WTC11 (cell line): ENCODE measurements at regions of chr19 and their contacts with region 1.

Region 1: DNA sequence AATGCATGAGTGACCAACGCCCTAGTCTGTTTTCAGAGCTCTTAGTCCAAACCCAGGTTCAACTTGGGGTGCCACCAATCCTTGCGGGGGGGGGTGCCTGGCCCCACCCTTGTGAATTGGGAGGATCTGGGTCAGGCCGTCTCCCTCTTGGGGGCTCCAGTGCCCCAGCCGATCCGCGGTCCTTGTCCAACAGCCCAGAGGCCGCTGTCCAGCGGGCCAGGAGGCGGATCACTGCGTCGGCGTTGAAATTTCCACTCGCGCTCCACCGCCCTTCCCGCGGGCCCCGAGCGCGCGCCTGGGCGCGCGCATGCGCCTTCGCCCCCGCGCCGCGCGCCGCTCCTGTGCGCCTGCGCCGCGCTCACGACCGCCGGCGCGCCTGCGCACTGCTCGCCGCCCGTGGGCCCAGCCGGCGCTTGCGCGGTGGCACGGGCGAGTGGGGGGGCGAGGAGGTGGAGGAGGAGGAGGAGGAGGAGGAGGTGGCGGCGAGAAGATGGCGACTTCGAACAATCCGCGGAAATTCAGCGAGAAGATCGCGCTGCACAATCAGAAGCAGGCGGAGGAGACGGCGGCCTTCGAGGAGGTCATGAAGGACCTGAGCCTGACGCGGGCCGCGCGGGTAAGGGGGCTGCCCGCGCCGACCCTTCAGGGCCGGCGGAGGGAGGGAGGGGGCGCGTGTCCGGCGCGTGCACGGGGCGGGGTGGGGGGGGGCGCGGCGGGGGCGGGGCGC is at the start of gene CRTC1:
- DNase-seq: peak; percentile 84
- ATAC-seq: peak; percentile 81
- H3K4me3 Mint-ChIP-seq: peak within 1 kb of the TSS; percentile 77
- H3K27ac Mint-ChIP-seq: no peak within 1 kb of the TSS
- H3K4me1 Mint-ChIP-seq: peaks cover 6% of the 10 kb centered on the region
- H3K27me3 Mint-ChIP-seq: no peaks in the 10 kb centered on the region; the same call in 1 of the 2 replicates
- CTCF ChIP-seq: no peak
- total RNA-seq, gene CRTC1: 12.3 to 17.0 TPM (median 16.3 TPM) in 3 replicates

Region 2: DNA sequence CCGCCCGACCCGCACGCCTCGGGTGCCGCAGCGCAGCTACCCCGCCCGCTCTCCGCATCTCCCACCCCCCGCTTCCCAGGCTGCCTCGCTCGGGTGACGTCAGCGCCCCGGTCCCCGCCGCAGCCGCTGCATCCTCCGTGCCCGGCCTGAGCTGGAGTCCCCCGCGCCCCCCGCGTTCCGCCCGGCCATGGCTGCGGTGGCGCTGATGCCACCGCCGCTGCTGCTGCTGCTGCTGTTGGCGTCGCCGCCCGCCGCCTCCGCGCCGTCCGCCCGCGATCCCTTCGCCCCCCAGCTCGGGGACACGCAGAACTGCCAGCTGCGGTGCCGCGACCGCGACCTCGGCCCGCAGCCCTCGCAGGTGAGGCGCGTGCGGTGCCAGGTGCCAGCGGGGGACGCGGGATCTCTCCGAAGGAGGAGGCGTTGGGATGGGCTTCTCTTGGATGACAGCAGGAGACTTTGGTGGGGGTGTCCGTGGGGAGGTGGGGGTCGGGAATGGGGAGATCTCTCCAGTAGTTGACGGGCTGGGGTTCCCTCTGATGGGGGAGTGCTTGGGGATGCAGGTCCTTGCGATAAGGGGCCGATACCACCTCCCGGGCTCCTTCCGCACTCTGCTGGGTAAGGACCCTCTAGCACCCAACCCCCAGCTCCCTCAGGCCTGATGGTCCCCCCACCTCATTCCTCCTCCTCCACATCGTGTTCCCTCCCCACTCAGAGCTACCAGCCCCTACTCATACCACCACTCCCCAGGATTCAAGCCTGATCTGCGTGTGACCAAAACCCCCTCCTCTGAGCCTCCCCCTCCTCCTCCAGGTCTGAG is 70.4 kb before region 1 on chr19 and contains the start of gene TMEM59L:
- CTCF ChIA-PET with region 1: no interaction called
- POLR2A ChIA-PET with region 1: no interaction called
- DNase-seq: peak; percentile 60
- ATAC-seq: no peak; the same call in 1 of the 2 replicates
- H3K4me3 Mint-ChIP-seq: peak within 1 kb of the TSS; percentile 80
- H3K27ac Mint-ChIP-seq: no peak within 1 kb of the TSS
- H3K4me1 Mint-ChIP-seq: peaks cover 38% of the 10 kb centered on the region
- H3K27me3 Mint-ChIP-seq: peaks cover 78% of the 10 kb centered on the region
- CTCF ChIP-seq: no peak
- total RNA-seq, gene TMEM59L: 14.8 to 30.0 TPM (median 27.3 TPM) in 3 replicates

Region 3: DNA sequence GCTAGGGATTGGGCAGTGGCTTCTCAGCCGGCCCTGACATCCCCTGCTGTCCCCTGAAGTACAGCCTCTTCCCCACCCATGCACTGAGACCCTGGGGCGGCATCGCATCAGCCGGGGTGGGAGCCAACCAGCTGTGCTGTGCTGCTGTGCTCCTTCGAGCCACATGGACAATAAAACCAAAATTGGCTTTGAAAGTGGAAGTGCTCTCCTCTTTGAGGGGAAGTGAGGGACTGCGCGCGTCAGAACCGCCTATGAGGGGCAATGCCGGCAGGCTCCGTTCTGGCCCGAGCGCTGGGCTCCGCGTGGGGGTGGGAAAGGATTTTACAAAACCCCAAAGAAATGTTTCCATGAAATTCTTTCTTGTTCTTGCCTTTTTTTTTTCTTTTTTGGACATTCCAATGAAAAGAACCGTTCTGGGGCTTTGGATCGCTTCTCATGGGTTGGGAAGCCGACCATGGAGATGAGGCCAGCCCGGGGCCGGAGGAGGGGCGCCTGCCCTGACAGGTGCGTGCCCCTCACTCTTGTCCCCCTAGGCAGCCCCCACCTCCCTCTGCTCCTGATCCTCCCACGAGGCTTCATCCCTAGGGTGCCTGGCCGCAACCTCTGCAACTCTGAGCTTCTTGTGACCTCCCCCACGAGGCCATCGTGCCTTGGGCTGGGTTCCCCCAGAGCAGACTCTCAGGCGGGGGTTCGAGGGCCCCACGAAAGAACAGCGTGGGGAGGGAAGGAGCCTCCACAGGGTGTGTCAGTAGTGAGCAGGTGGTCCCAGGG is 23.9 kb before region 1 on chr19:
- CTCF ChIA-PET with region 1: no interaction called
- POLR2A ChIA-PET with region 1: no interaction called
- DNase-seq: no peak
- ATAC-seq: no peak
- H3K4me3 Mint-ChIP-seq: no peak overlapping the region
- H3K27ac Mint-ChIP-seq: peak overlapping the region; percentile 2; the same call in 1 of the 2 replicates
- H3K4me1 Mint-ChIP-seq: peaks cover 13% of the 10 kb centered on the region
- H3K27me3 Mint-ChIP-seq: no peaks in the 10 kb centered on the region
- CTCF ChIP-seq: no peak

Region 4: GRCh38 chr19:18856385-18857126 is 173.2 kb after region 1 on chr19:
- CTCF ChIA-PET with region 1: no interaction called
- POLR2A ChIA-PET with region 1: interaction called, 11 read pairs
- DNase-seq: peak; percentile 44
- ATAC-seq: peak; percentile 67
- H3K4me3 Mint-ChIP-seq: no peak overlapping the region
- H3K27ac Mint-ChIP-seq: peak overlapping the region; percentile 74
- H3K4me1 Mint-ChIP-seq: no peaks in the 10 kb centered on the region
- H3K27me3 Mint-ChIP-seq: no peaks in the 10 kb centered on the region
- CTCF ChIP-seq: no peak